ENCODE measurements at regions of chr22 and their contacts with region 1.

Region 1: DNA sequence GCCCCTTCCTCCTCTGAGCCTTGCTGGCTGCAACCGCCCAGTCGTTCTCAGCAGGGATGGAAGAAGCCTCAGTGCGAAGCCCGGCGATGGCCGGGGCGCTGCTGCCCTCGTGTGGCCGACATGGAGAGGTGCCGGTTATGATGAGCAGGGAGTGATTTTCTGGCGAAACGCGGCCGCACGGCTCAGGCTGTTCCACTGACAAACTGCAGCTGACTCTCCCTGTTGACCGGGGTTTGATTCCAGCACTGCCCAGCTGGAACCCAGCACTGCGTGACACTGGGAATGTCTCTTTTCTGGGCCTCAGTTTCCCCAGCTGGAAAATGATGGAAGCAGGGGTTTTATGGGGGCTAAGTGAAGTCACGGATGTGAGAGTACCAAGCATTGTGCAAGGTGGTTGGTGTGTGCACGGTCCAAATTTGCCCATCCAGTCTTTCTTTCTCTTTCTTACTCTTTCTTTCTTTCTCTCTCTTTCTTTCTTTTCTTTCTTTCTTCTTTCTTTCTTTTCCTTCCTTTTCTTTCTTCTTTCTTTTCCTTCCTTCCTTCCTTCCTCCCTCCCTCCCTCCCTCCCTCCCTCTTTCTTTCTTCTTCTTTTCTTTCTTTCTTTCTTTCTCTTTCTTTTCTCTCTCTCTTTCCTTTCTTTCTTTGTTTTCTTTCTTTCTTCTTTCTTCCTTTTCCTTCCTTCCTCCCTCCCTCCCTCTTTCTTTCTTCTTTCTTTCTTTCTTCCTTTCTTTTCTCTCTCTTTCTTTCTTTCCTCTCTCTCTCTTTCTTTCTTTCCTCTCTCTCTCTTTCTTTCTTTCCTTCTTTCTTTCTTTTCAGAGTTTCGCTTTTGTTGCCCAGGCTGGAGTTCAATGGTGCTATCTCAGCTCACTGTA is 25.8 kb upstream of the MPPED1 start:
- DNase-seq: peak; percentile 74
- H3K4me3 Mint-ChIP-seq: no peak overlapping the region
- H3K27ac Mint-ChIP-seq: no peak overlapping the region
- H3K4me1 Mint-ChIP-seq: no peaks in the 10 kb centered on the region
- H3K27me3 Mint-ChIP-seq: peaks cover 93% of the 10 kb centered on the region
- CTCF ChIP-seq: peak; percentile 93

Region 2: DNA sequence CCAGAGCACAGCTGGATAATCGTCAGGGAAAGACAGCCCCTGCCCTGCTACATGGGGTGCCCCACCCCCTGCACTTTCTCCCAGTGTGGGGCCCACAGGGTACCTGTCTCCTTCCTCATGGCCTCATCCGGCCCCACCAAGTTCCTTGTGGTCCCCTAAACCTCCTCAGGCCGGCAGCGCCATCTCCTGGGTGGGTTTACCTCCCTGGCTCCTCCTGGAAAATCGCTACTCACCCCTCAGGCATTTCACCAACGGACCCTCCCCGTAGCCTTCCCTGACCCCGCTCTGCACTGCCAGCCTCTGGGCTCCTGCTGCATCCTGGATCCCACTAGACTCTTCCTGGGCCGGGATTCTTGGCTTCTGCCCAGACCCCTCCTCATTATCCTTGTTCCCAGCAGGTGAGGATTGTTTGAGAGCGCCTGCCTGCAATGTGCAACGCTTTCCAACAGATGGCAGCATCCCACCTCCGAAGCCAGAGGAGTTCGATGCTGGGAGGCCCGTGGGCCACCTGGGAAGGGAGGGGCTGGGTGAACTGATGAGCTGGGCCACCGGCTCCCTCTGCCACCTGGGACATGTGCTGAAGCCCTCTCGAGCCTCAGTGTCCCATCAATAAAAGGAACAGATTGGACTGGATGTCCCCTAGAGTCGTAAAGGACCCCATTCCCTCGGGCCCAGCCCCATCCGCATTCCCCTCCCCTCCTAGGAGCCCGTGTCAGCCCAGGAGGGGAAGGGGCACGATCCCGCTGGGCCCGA is 154.9 kb before region 1 on chr22:
- CTCF ChIA-PET with region 1: interaction called, 34 read pairs
- POLR2A ChIA-PET with region 1: no interaction called
- intact Hi-C with region 1: loop called (anchors 1 kb)
- DNase-seq: peak; percentile 65
- H3K4me3 Mint-ChIP-seq: no peak overlapping the region
- H3K27ac Mint-ChIP-seq: no peak overlapping the region
- H3K4me1 Mint-ChIP-seq: peaks cover 12% of the 10 kb centered on the region
- H3K27me3 Mint-ChIP-seq: peaks cover 43% of the 10 kb centered on the region
- CTCF ChIP-seq: peak; percentile 94

Region 3: GRCh38 chr22:43346521-43346929 is 39.5 kb before region 1 on chr22:
- CTCF ChIA-PET with region 1: interaction called, 11 read pairs
- POLR2A ChIA-PET with region 1: no interaction called
- intact Hi-C with region 1: no loop called
- DNase-seq: peak; percentile 48
- H3K4me3 Mint-ChIP-seq: no peak overlapping the region
- H3K27ac Mint-ChIP-seq: no peak overlapping the region
- H3K4me1 Mint-ChIP-seq: no peaks in the 10 kb centered on the region
- H3K27me3 Mint-ChIP-seq: peaks cover 67% of the 10 kb centered on the region
- CTCF ChIP-seq: peak; percentile 70

Region 4: GRCh38 chr22:43404673-43405385 is 18.8 kb after region 1 on chr22:
- CTCF ChIA-PET with region 1: interaction called, 19 read pairs
- POLR2A ChIA-PET with region 1: no interaction called
- intact Hi-C with region 1: no loop called
- DNase-seq: peak; percentile 94
- H3K4me3 Mint-ChIP-seq: no peak overlapping the region
- H3K27ac Mint-ChIP-seq: no peak overlapping the region
- H3K4me1 Mint-ChIP-seq: peaks cover 10% of the 10 kb centered on the region
- H3K27me3 Mint-ChIP-seq: peaks cover 55% of the 10 kb centered on the region
- CTCF ChIP-seq: no peak

Region 5: DNA sequence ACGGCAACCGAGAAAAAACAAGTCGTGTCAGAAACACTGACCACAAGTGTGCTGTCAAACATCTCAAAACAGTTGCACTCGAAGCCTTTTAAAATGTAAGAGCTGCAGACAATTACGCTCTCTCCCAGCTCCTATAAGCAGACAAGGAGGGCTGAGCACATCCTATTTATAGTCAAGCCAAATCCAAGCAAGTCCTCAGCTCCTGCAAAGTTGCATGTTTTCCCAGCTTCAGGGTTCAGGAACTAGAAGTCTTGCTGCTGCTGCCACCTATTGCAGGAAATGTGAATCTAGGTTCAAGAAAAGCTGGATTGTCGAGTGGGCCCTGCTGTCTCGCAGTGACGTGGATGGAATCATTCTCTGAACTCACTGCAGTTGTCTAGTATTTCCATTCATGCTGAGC is 410.6 kb after region 1 on chr22:
- CTCF ChIA-PET with region 1: interaction called, 13 read pairs
- POLR2A ChIA-PET with region 1: no interaction called
- intact Hi-C with region 1: loop called (anchors 1 kb)
- DNase-seq: peak; percentile 38
- H3K4me3 Mint-ChIP-seq: no peak overlapping the region
- H3K27ac Mint-ChIP-seq: no peak overlapping the region
- H3K4me1 Mint-ChIP-seq: no peaks in the 10 kb centered on the region
- H3K27me3 Mint-ChIP-seq: peaks cover 33% of the 10 kb centered on the region
- CTCF ChIP-seq: peak; percentile 41

Measured in MCF 10A (cell line).